ENCODE measurements at regions of chr14 and their contacts with region 1.

Region 1: DNA sequence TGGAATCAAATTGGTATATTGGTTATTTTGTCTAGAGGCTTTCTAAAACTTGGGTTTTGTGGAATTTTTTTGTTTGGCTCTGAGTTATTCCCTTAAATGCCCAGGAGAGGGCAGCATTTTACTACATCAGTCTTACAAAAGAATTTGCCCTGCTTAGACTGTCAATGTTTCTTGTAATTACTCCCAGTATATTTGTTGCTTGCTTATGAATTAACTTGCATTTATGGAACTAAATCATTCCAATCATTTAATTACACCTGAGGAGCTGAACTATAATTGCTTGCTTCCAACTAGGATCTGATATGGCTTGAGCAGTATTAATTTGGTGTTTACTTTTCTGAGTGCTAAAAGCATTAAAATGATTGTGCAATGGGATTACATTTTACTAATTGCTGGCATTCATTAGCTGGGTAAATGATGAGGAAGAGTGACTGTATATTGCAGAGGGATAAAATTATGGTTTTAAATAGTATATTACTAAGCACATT is 48.7 kb downstream of the MIPOL1 start:
- DNase-seq: no peak
- ATAC-seq: peak; percentile 75 to 82 (median 77)
- H3K4me3 ChIP-seq: no peak overlapping the region
- H3K27ac ChIP-seq: peak overlapping the region in 1 of 3 donors; percentile 63
- H3K4me1 ChIP-seq: peaks cover 0 to 36% (median 2%) of the 10 kb centered on the region in 4 donors
- H3K27me3 ChIP-seq: no peaks in the 10 kb centered on the region
- CTCF ChIP-seq: peak; percentile 78 to 90 (median 80)
- POLR2A ChIP-seq: no peak

Region 2: GRCh38 chr14:37320106-37320505 is 73.6 kb after region 1 on chr14:
- intact Hi-C with region 1: no loop called
- DNase-seq: no peak
- ATAC-seq: no peak
- H3K4me3 ChIP-seq: no peak overlapping the region
- H3K27ac ChIP-seq: no peak overlapping the region
- H3K4me1 ChIP-seq: no peaks in the 10 kb centered on the region
- H3K27me3 ChIP-seq: no peaks in the 10 kb centered on the region
- CTCF ChIP-seq: no peak
- POLR2A ChIP-seq: no peak

Region 3: GRCh38 chr14:37594238-37594914 is 347.9 kb after region 1 on chr14:
- intact Hi-C with region 1: loop called in 1 of 2 experiments (anchors 5 kb)
- DNase-seq: peak; percentile 67 to 86 (median 76)
- ATAC-seq: peak; percentile 19 to 35 (median 23)
- H3K4me3 ChIP-seq: peak overlapping the region; percentile 59 to 85 (median 65)
- H3K27ac ChIP-seq: peak overlapping the region; percentile 88 to 97 (median 93)
- H3K4me1 ChIP-seq: no peaks in the 10 kb centered on the region
- H3K27me3 ChIP-seq: no peaks in the 10 kb centered on the region
- CTCF ChIP-seq: peak; percentile 68 to 91 (median 81)
- POLR2A ChIP-seq: no peak

Measured in right lobe of liver (tissue), 6 donors.